Activated naive CD4-positive, alpha-beta T cell treated with anti-CD3 and anti-CD28 coated beads, Interleukin-2, amount 10 ng/mL, durations not matched to agents 7 days and 5 days (primary cell): ENCODE measurements at regions of chr2 and their contacts with region 1.

Region 1: GRCh38 chr2:10408649-10409579 is 39.2 kb downstream of the ODC1 start:
- DNase-seq: peak; percentile 88
- H3K4me3 Mint-ChIP-seq: peak overlapping the region; percentile 56
- H3K27ac Mint-ChIP-seq: peak overlapping the region; percentile 92
- H3K4me1 Mint-ChIP-seq: peaks cover 42% of the 10 kb centered on the region
- H3K27me3 Mint-ChIP-seq: no peaks in the 10 kb centered on the region

Region 2: GRCh38 chr2:10141736-10142642 is 266.9 kb before region 1 on chr2:
- CTCF ChIA-PET with region 1: interaction called, 63 read pairs
- DNase-seq: peak; percentile 74
- H3K4me3 Mint-ChIP-seq: peak overlapping the region; percentile 10
- H3K27ac Mint-ChIP-seq: peak overlapping the region; percentile 84
- H3K4me1 Mint-ChIP-seq: peaks cover 51% of the 10 kb centered on the region
- H3K27me3 Mint-ChIP-seq: no peaks in the 10 kb centered on the region

Region 3: DNA sequence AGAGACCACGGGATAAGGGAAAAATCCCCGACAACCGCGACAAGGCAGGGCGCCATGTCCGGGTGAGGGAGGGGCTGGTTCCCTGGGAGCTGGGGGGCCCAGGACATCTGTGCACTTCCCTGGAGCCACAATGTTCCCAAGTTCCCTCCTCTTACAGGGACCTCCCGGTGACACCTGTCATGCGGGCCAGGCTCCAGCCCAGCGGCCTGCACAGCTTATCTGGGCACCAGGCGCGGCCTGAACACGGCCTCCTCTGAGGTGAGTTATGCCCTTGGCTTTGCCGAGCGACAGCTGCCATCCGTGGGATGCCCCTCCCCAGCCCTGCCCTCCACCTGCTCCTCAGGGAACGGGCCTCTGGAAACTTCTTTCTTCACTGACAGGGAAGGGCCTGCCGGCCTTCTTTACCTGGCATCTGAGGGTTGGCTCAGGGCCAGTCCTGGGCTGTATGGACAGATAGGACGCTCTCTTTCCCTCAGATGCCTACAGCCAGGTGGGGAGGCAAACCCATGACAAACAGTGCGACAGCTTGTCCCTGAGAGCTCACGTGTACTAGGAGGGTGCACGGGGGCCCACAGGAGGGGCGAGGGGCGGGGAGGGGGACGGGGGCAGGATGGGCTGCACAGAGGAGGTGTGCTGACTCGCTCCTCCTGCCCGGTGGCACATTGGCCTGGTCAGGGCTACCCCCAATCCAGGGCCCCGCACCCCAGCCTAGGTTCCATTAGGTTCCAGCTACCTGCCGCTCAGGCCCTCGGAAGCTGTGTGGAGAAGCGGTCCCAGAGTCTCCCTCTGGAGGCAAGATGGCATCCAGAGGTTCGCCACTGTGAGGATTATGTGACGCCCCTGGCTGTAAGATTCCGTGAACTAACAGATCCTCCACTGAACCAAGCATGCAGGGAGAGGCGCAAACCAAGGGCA is 141.1 kb before region 1 on chr2:
- CTCF ChIA-PET with region 1: interaction called, 38 read pairs
- DNase-seq: no peak
- H3K4me3 Mint-ChIP-seq: no peak overlapping the region
- H3K27ac Mint-ChIP-seq: no peak overlapping the region
- H3K4me1 Mint-ChIP-seq: peaks cover 7% of the 10 kb centered on the region
- H3K27me3 Mint-ChIP-seq: peaks cover 38% of the 10 kb centered on the region

Region 4: DNA sequence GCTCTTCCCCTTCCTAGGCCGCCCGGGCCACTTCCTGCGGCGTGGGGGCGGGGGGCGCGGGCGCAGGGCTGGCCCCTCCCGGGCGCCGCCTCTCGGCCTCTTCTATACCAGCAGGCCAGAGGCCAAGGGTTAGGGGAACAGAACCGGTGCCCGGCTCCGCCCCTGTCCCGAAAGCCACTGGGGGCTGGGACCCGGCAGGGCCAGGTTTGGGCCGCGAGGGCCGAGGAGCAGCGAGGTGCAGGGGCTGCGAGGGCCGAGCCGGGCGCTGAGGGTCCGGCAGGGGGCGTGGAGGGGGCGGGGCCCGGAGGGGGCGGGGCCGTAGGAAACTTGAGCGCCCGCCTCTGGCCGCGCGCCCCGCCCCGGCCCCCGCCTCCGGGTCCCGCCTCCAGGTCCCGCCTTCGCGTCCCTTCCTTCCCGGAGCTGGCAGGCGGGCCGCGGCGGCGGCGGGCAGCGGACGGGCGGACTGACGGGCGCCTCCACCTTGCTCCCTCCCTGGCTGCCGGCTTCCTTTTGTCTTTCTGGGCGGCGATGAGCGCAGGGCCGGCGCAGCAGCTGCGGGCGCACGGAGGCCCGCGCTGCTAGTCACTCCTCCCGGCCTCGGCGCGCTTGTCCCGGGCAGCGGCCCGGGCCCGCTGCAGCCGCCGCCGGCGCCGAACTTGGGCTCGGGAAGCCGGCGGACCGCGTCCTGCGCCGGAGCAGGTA is 106.3 kb before region 1 on chr2 and contains the start of gene HPCAL1:
- CTCF ChIA-PET with region 1: interaction called, 72 read pairs
- DNase-seq: peak; percentile 88
- H3K4me3 Mint-ChIP-seq: peak within 1 kb of the TSS; percentile 98
- H3K27ac Mint-ChIP-seq: peak within 1 kb of the TSS; percentile 91
- H3K4me1 Mint-ChIP-seq: peaks cover 76% of the 10 kb centered on the region
- H3K27me3 Mint-ChIP-seq: no peaks in the 10 kb centered on the region

Region 5: DNA sequence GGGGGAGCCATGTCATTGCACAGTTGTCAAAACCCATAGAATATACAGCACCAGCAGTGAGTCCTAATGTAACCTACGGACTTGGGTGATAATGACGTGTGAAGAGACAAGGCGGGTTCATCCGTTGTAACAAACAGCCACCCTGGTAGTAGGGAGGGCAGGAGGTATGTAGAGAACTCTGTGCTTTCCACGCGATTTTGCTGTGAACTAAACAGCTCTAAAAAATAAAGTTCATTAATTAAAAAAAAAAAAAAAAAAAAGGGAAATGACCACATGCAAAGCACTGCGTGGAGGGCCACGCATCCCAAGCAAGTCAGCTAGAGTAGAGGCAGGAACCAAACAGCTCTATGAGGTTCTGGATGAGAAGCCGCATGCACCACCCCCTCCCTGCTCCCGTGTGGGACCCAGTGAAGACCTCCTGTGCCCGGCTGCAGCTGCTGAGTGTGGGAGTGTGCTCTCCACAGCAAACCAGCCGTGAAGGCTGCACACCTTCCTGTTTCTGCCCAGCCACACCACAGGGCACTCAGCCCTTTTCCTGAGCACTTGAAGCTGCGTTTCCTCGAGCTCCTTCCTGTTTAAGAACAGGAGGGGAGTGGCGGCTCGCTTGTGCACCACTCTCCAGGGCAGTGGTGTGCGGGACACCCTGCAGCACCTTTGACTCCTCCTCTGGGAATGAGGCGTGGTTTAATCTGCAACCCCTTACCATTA is 26.4 kb before region 1 on chr2:
- CTCF ChIA-PET with region 1: interaction called, 26 read pairs
- DNase-seq: peak; percentile 69
- H3K4me3 Mint-ChIP-seq: peak overlapping the region; percentile 56
- H3K27ac Mint-ChIP-seq: peak overlapping the region; percentile 86
- H3K4me1 Mint-ChIP-seq: peaks cover 86% of the 10 kb centered on the region
- H3K27me3 Mint-ChIP-seq: no peaks in the 10 kb centered on the region

Region 6: DNA sequence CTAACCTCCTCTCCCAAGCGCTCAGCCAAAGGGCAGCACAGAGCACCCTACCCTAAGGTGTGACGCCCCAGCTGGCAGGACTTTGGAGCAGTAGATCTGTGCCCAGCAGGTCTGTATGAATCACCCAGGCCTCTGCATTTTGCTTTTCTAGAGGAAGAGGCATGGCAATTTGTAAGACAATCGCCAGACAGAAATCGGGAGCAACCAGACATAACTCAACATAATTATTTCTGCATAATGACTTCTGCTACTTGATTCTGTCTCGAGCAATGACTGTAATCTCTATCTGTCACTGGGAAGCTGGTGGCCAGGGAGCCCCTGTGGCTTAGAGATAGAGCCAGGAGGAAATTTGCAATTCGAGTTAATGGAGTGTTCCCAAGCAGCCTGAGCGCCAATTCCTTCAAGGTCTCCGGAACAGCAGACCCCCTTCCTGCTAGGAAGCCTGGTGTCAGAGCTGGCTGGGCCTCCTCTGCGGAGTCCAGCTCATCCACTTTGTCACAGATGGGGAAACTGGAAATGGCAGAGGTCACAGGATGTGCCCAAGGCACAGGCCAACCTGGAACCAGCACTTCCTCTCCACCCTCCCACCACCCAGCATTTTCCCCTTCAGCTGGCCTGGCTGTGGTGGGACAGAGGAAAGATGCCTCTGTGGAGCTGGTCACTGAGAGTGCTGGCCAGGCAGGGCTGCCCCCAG is 15.8 kb before region 1 on chr2:
- CTCF ChIA-PET with region 1: no interaction called
- DNase-seq: no peak
- H3K4me3 Mint-ChIP-seq: no peak overlapping the region
- H3K27ac Mint-ChIP-seq: no peak overlapping the region
- H3K4me1 Mint-ChIP-seq: peaks cover 14% of the 10 kb centered on the region
- H3K27me3 Mint-ChIP-seq: no peaks in the 10 kb centered on the region

Region 7: DNA sequence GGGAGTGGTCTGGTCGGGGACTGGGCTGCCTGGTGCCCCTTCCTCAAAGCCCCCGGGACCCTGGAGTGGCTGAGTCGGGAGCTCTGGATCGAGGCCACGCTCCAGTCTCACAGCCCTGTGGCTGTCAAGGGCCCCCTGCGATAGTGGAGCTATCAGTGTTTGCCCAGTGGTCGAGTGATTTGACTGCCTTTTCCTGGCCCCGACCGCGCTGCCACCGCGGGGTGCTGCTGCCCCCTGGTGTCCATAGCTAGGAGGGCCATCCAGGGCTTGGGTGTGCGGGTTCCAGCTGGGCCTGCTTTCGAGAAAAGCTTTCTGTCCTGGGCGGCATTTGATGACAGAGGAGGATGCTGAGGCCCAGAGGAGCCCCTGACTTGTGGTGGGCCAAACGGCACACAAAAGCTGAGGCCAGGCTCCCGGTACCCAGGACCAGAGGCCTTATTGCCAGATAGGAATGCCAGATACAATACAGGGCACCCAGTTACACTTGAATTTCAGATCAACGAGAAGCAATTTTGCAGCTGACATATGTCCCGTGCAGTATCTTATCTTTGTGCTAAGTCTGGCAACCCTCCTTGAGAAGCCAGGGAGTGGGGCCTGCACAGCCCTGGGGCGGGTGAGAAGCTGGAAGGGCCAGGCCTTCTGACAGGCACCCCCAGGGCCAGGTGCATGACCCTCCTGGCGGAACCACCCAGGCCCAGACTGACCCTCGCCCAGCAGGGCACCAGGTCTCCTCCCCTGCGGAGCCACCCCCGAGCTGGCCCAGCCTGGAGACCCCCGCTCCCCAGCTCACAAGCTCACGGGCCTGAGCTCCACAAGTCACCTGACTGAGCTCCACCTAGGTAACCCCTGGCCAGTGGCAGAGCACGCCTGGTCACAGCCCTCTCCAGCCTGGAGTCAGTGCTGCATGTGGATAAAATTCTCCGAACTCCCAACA is 26.2 kb after region 1 on chr2:
- CTCF ChIA-PET with region 1: interaction called, 31 read pairs
- DNase-seq: peak; percentile 73
- H3K4me3 Mint-ChIP-seq: no peak overlapping the region
- H3K27ac Mint-ChIP-seq: no peak overlapping the region
- H3K4me1 Mint-ChIP-seq: peaks cover 13% of the 10 kb centered on the region
- H3K27me3 Mint-ChIP-seq: peaks cover 46% of the 10 kb centered on the region

Region 8: DNA sequence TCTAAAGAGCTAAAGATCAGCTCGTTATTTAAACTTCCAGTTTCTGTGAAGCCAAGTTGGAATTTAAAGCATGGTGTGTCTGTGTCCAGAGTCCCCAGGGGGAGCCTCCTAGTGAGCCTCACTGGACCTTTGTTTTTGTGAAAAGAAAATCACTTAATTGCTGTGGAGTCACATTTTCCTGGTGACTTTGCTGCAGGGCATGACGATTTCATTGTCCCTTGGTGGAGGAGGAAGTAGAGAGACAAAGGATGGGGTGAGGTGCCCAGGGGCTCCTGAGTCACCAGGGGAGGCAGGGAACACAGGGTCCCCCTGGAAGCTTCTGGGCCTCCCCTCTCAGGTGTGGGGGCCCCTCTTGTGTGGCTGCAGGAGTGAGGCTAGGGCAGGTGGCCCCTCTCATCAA is 332.2 kb after region 1 on chr2:
- CTCF ChIA-PET with region 1: no interaction called
- DNase-seq: no peak
- H3K4me3 Mint-ChIP-seq: no peak overlapping the region
- H3K27ac Mint-ChIP-seq: no peak overlapping the region
- H3K4me1 Mint-ChIP-seq: peaks cover 4% of the 10 kb centered on the region
- H3K27me3 Mint-ChIP-seq: peaks cover 12% of the 10 kb centered on the region